ENCODE measurements at regions of chr3 and their contacts with region 1.

Region 1: DNA sequence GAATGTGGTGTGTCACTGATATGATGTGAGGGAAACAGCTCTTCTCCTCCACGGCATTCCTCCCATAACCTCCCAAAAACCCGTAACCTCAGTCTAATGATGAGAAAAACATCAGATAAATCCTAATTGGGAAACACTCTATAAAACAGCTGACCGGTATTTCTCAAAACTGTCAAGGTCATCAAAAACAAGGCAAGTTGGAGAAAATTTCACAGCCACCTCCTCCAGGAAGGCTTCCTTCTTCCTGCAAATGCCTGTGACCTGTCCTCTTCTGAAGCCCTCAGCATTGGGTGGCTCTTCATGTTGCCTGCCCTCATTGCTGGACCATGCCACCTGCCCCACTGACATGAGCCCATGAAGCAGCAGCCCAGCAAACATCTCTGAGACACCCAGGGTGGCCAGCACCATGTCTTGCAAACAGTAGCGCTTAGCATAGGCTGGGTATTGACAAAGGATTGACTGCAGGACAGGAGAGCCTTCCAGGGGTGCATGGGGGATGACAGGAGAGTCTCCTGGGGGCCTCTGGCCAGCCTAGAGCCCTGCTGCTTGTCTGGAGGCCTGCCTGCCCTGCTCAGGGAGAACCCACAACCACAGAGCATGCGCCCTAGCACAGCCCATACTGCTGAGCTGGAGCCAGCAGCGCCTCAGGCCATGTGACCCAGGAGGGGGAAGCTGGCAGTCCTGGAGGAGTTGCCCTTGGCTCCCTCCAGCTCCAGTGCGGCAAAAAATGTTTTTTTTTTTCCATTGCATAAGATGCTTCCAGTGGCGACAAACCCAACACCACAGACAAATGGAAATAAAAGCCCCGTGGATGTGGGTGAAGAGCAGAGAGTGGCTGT is 49.7 kb downstream of the XXYLT1 start:
- DNase-seq: no peak
- H3K4me3 ChIP-seq: no peak overlapping the region
- H3K27ac ChIP-seq: peak overlapping the region; percentile 90 to 92
- H3K4me1 ChIP-seq: peaks cover 24 to 34% of the 10 kb centered on the region in 2 donors
- H3K27me3 ChIP-seq: no peaks in the 10 kb centered on the region
- CTCF ChIP-seq: no peak

Region 2: GRCh38 chr3:195172039-195172684 is 49.1 kb before region 1 on chr3:
- intact Hi-C with region 1: loop called (anchors 5 kb)
- DNase-seq: peak in 1 of 2 donors; percentile 79
- H3K4me3 ChIP-seq: peak overlapping the region in 1 of 2 donors; percentile 37
- H3K27ac ChIP-seq: peak overlapping the region in 1 of 2 donors; percentile 41
- H3K4me1 ChIP-seq: peaks cover 7 to 16% of the 10 kb centered on the region in 2 donors
- H3K27me3 ChIP-seq: no peaks in the 10 kb centered on the region
- CTCF ChIP-seq: no peak